GM10248 (cell line): ENCODE measurements at regions of chr3 and their contacts with region 1.

Region 1: DNA sequence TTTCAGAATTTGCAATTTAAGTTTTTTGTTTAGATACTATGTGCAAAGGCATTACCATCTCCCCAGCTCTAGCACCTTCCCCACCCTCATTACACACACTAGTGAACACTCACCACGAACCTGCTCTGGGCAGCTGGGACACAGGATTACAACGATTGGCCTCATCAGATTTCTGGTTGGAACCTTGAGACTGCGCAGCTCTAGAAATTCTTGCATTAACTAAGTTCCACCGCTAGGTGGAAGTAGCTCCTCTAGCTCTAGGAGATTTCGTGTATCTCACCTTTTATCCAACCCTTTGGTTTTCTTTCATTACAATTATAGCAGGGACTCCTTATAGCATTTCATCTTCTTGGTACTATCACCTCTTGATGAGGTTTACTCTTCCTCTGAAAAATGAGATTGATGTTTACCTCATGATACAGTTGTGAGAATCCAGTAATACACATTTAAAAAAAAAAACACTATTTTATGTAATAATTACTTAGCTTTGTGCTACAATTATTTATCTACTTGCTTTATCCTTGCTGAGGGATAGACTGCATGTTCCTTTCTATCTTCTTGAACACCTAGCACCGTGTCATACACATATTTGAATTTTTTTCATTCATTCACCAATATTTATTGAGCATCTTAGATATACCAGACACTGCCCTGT is 28.7 kb upstream of the PLOD2 start:
- DNase-seq: peak; percentile 45
- CTCF ChIP-seq: peak; percentile 76

Region 2: GRCh38 chr3:146065573-146066006 is 124.1 kb before region 1 on chr3:
- CTCF ChIA-PET with region 1: interaction called, 29 read pairs
- POLR2A ChIA-PET with region 1: no interaction called
- DNase-seq: no peak
- CTCF ChIP-seq: peak; percentile 70

Region 3: GRCh38 chr3:146131616-146132410 is 57.8 kb before region 1 on chr3:
- CTCF ChIA-PET with region 1: no interaction called
- POLR2A ChIA-PET with region 1: no interaction called
- DNase-seq: no peak
- CTCF ChIP-seq: no peak

Region 4: GRCh38 chr3:146177519-146177918 is 12.1 kb before region 1 on chr3:
- CTCF ChIA-PET with region 1: interaction called, 28 read pairs
- POLR2A ChIA-PET with region 1: no interaction called
- DNase-seq: no peak
- CTCF ChIP-seq: no peak

Region 5: GRCh38 chr3:146241523-146242240 is 52.0 kb after region 1 on chr3:
- CTCF ChIA-PET with region 1: no interaction called
- POLR2A ChIA-PET with region 1: no interaction called
- DNase-seq: no peak
- CTCF ChIP-seq: no peak

Region 6: DNA sequence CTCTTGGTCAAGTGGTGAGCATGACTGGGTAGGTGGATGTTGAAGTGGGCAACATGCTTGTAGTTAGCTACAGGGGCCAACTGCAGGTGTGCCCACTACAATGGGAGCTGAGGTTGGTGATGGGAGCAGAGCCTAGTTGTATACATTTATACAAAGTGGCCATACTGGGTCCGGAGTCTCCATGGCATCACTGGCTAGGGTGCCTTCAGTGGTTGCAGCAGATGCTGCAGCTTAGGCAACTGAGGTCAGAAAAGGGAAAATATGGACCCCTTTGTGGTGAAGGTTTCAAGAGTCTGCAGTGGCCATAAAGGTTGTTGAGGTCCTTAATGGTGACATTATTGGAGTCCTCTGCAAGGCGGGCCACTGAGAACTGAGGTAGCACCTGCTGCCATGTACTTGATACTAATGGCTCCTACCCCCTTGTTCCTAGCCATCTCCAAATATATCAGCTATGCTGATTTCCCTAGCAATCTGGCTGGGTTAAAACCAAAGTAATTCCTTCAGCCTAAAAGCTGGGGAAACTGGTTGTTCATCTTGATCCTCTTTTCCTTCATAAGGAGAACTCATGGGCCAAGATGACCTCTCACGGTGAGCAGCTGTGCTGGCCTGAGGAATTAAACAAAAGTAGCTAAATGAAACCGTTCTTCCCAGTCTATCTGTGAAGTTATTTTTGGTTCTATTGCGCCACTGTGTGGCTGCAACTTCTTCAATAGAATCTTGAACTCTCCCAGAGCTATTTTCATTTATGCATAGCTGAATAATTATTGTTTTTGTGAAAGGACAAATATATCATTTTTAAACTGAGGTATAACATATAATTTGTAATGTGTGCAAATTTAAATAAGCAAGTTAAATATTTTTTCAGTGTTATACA is 137.3 kb after region 1 on chr3:
- CTCF ChIA-PET with region 1: interaction called, 19 read pairs
- POLR2A ChIA-PET with region 1: no interaction called
- DNase-seq: no peak
- CTCF ChIP-seq: no peak

Region 7: GRCh38 chr3:146640955-146641867 is 451.6 kb after region 1 on chr3:
- CTCF ChIA-PET with region 1: interaction called, 11 read pairs
- POLR2A ChIA-PET with region 1: no interaction called
- DNase-seq: peak; percentile 19
- CTCF ChIP-seq: peak; percentile 40